H1 (cell line): ENCODE measurements at regions of chr1 and their contacts with region 1.

Region 1: GRCh38 chr1:62082456-62083363 is 111.9 kb upstream of the L1TD1 start:
- DNase-seq: no peak
- H3K4me3 ChIP-seq: no peak overlapping the region
- H3K27ac ChIP-seq: no peak overlapping the region
- H3K4me1 ChIP-seq: no peaks in the 10 kb centered on the region
- H3K27me3 ChIP-seq: no peaks in the 10 kb centered on the region
- CTCF ChIP-seq: peak; percentile 61 to 93 (median 79)
- EP300 ChIP-seq: no peak
- POLR2A ChIP-seq: no peak
- RAD21 ChIP-seq: peak; percentile 61 to 67

Region 2: DNA sequence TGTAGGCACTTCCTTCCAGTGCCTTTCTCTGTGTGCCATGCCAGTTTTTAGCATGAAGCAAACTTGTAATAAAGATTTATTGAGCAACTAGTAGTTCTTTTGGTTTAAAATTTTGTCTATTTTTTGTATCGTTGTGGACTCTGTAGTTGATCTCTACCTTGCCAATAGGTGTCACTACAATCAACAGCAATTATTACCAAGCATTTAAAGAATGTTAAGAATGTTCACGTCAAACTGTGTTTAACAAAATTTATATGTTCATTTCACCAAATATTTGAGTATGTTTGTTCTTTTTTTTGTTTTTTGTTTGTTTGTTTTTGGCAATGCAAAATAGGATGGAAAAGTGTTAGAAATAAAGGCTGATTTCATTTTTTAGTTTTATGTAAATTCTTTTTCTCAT is 132.3 kb before region 1 on chr1:
- CTCF ChIA-PET with region 1: interaction called, 25 read pairs
- POLR2A ChIA-PET with region 1: no interaction called
- DNase-seq: no peak
- H3K4me3 ChIP-seq: no peak overlapping the region
- H3K27ac ChIP-seq: peak overlapping the region; percentile 71; the same call in 1 of the 2 replicates
- H3K4me1 ChIP-seq: peaks cover 7 to 22% (median 17%) of the 10 kb centered on the region in 4 experiments; a peak in 5 of 7 replicates
- H3K27me3 ChIP-seq: no peaks in the 10 kb centered on the region
- CTCF ChIP-seq: peak in 2 of 3 experiments; percentile 13 to 57; a peak in 2 of 4 replicates
- EP300 ChIP-seq: 0 out of 3 replicates have a peak, but pooled peaks of 1 of the 2 experiments have one; percentile 37
- POLR2A ChIP-seq: no peak
- RAD21 ChIP-seq: peak; percentile 56 to 66

Region 3: DNA sequence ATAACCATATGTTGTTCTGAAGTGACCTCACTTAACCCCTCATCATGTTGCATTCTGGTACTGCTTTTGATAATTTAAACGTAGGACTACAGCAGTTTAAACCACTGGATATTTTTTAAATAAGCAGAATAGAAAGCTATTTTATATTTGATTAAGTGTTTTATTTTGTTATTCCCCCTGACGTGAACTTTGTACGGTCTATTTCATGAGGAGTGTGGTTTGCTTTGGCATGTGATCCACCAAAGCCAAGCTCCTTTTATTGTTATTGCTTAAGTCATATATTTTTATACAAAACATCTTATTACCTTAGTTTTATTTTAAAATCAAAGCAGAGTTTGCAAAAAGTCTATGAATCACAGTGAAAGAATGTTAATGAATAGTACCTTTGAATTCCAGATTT is 10.6 kb after region 1 on chr1:
- CTCF ChIA-PET with region 1: interaction called, 77 read pairs
- POLR2A ChIA-PET with region 1: no interaction called
- DNase-seq: no peak
- H3K4me3 ChIP-seq: no peak overlapping the region
- H3K27ac ChIP-seq: no peak overlapping the region
- H3K4me1 ChIP-seq: no peaks in the 10 kb centered on the region
- H3K27me3 ChIP-seq: no peaks in the 10 kb centered on the region
- CTCF ChIP-seq: no peak
- EP300 ChIP-seq: no peak
- POLR2A ChIP-seq: no peak
- RAD21 ChIP-seq: no peak

Region 4: GRCh38 chr1:62111084-62111483 is 28.4 kb after region 1 on chr1:
- CTCF ChIA-PET with region 1: interaction called, 34 read pairs
- POLR2A ChIA-PET with region 1: no interaction called
- DNase-seq: no peak
- H3K4me3 ChIP-seq: no peak overlapping the region
- H3K27ac ChIP-seq: no peak overlapping the region
- H3K4me1 ChIP-seq: no peaks in the 10 kb centered on the region
- H3K27me3 ChIP-seq: no peaks in the 10 kb centered on the region
- CTCF ChIP-seq: no peak
- EP300 ChIP-seq: no peak
- POLR2A ChIP-seq: no peak
- RAD21 ChIP-seq: peak; percentile 25 to 31; a peak in 2 of 4 replicates

Region 5: GRCh38 chr1:62144238-62144831 is 61.6 kb after region 1 on chr1:
- CTCF ChIA-PET with region 1: interaction called, 15 read pairs
- POLR2A ChIA-PET with region 1: no interaction called
- DNase-seq: peak in 1 of 2 experiments; percentile 71
- H3K4me3 ChIP-seq: no peak overlapping the region
- H3K27ac ChIP-seq: no peak overlapping the region
- H3K4me1 ChIP-seq: peaks cover 0 to 9% (median 4%) of the 10 kb centered on the region in 4 experiments; a peak in 4 of 7 replicates
- H3K27me3 ChIP-seq: no peaks in the 10 kb centered on the region
- CTCF ChIP-seq: peak in 2 of 3 experiments; percentile 65 to 77; a peak in 3 of 4 replicates
- EP300 ChIP-seq: no peak
- POLR2A ChIP-seq: no peak
- RAD21 ChIP-seq: peak; percentile 66 to 72